A549 (cell line): ENCODE measurements at regions of chr3 and their contacts with region 1.

Region 1: DNA sequence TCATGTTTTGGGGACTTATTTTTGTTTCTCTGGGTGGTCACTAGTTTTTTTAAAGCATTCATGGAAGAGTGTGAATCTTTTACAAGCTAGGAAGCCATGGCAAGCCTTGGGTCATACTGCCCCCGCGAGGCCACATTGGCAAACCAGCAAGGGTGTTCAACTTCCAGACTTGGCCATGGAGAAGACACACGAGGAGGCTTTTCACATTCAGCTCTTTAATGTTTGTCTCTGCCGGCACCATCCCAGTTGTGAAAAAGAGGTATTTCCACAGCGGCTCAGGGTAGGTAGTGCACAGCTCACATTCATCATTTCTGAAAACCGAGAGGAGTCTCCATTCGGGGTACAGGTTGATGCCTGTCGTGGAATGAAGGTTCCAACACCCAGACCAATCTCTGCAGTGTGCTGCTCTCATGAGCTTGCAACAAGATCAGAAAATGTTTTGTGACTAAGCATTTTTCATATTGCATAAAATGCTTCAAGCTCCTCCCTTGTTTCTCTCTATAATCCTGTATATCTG is 7.7 kb downstream of the CCR5 start:
- DNase-seq: peak; percentile 45 to 56
- ATAC-seq: peak; percentile 80 to 87; a peak in 5 of 6 replicates
- H3K4me3 ChIP-seq: no peak overlapping the region
- H3K27ac ChIP-seq: no peak overlapping the region
- H3K4me1 ChIP-seq: no peaks in the 10 kb centered on the region
- CTCF ChIP-seq: peak; percentile 63
- EP300 ChIP-seq: no peak
- POLR2A ChIP-seq: no peak
- RAD21 ChIP-seq: peak; percentile 68 to 78

Region 2: GRCh38 chr3:45938864-45939263 is 439.6 kb before region 1 on chr3:
- CTCF ChIA-PET with region 1: interaction called, 12 read pairs
- POLR2A ChIA-PET with region 1: no interaction called
- DNase-seq: peak; percentile 40 to 80
- ATAC-seq: peak; percentile 94 to 95
- H3K4me3 ChIP-seq: no peak overlapping the region
- H3K27ac ChIP-seq: no peak overlapping the region
- H3K4me1 ChIP-seq: no peaks in the 10 kb centered on the region
- CTCF ChIP-seq: peak; percentile 84
- EP300 ChIP-seq: no peak
- POLR2A ChIP-seq: no peak
- RAD21 ChIP-seq: peak; percentile 77 to 83

Region 3: DNA sequence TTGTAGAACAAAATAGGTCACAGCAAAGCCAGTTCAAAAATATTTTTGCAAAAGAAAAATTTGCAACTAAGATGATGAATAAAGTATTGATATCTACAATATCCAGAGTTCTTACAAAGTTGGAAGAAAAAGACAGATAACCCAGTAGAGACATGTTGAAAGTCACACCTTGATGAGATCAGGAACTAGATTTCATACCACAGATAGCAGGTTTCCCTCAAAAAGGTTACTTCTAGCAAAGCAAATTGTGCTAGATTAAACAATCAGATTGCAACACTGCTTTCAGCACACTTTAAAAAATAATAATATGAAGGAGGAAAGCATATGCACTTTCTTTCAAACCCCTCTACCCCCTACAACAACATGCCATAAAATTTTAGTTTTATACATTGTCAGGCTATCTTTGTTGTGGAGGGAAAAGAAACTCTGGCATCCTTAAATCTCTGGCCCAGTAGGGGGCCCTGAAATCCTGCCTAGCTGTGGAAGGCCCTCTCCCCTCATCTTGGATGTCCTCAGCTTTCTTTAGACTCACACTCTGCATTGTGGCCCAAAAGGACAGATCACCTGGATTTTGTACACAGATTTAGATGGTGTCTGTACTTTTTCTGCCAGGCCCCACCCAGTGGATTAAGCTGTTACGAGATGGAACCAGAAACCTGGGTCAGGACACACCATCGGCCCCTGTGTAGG is 85.3 kb before region 1 on chr3:
- CTCF ChIA-PET with region 1: no interaction called
- POLR2A ChIA-PET with region 1: no interaction called
- DNase-seq: no peak
- ATAC-seq: no peak
- H3K4me3 ChIP-seq: no peak overlapping the region
- H3K27ac ChIP-seq: no peak overlapping the region
- H3K4me1 ChIP-seq: no peaks in the 10 kb centered on the region
- CTCF ChIP-seq: no peak
- EP300 ChIP-seq: no peak
- POLR2A ChIP-seq: no peak
- RAD21 ChIP-seq: no peak